A549 (cell line): ENCODE measurements at regions of chr5 and their contacts with region 1.

Region 1: GRCh38 chr5:38382898-38383297 is 124.5 kb downstream of the EGFLAM start:
- DNase-seq: peak; percentile 72 to 76
- ATAC-seq: peak; percentile 96 to 99
- H3K4me3 ChIP-seq: no peak overlapping the region
- H3K27ac ChIP-seq: no peak overlapping the region
- H3K4me1 ChIP-seq: no peaks in the 10 kb centered on the region
- CTCF ChIP-seq: peak; percentile 73
- EP300 ChIP-seq: no peak
- POLR2A ChIP-seq: no peak
- RAD21 ChIP-seq: peak; percentile 73 to 77

Region 2: DNA sequence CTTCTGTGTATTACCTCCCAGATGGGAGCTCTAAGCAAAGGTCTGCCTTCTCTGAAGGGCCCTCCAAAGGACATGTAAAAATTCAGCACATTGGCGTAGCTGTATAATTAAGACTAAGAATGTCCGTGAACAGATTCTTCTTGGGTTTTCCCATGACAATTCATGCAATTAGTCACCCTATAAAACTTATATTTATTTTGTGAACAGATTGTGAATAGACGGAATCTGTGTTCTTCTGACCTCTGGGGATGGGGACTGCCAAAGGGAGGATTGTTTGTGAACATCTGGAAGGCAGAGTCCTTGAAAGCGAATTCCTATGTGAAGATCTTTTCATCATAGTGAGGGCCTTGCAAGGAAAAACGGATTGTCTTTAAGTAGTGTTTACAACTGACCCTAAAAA is 13.2 kb before region 1 on chr5:
- CTCF ChIA-PET with region 1: interaction called, 19 read pairs
- POLR2A ChIA-PET with region 1: interaction called, 5 read pairs
- DNase-seq: no peak
- ATAC-seq: no peak
- H3K4me3 ChIP-seq: no peak overlapping the region
- H3K27ac ChIP-seq: no peak overlapping the region
- H3K4me1 ChIP-seq: no peaks in the 10 kb centered on the region
- CTCF ChIP-seq: no peak
- EP300 ChIP-seq: no peak
- POLR2A ChIP-seq: no peak
- RAD21 ChIP-seq: no peak

Region 3: GRCh38 chr5:38393636-38394035 is 10.7 kb after region 1 on chr5:
- CTCF ChIA-PET with region 1: interaction called, 22 read pairs
- POLR2A ChIA-PET with region 1: no interaction called
- DNase-seq: no peak
- ATAC-seq: no peak
- H3K4me3 ChIP-seq: no peak overlapping the region
- H3K27ac ChIP-seq: no peak overlapping the region
- H3K4me1 ChIP-seq: no peaks in the 10 kb centered on the region
- CTCF ChIP-seq: no peak
- EP300 ChIP-seq: no peak
- POLR2A ChIP-seq: no peak
- RAD21 ChIP-seq: no peak

Region 4: DNA sequence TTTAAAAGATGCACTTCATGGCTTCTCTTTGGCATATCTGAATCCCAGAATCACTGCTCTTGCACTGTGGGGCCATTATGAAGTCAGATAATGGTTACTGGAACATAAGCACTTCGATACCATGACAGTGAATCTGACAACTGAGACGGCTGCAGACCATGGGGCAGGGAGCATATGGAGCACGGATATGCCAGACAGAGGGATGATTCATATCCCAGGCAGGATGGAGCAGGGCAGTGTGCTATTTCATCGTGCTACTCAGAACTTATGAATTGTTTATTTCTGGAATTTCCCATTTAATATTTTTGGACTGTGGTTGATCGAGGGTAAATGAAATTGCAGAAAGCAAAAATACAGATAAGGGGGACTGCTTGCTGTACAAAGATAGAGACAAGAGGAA is 20.5 kb after region 1 on chr5:
- CTCF ChIA-PET with region 1: interaction called, 10 read pairs
- POLR2A ChIA-PET with region 1: no interaction called
- DNase-seq: no peak
- ATAC-seq: 0 out of 6 replicates have a peak, but pooled peaks have one; percentile 38 to 59
- H3K4me3 ChIP-seq: no peak overlapping the region
- H3K27ac ChIP-seq: no peak overlapping the region
- H3K4me1 ChIP-seq: no peaks in the 10 kb centered on the region
- CTCF ChIP-seq: no peak
- EP300 ChIP-seq: no peak
- POLR2A ChIP-seq: no peak
- RAD21 ChIP-seq: no peak

Region 5: GRCh38 chr5:38420691-38421390 is 37.9 kb after region 1 on chr5:
- CTCF ChIA-PET with region 1: interaction called, 11 read pairs
- POLR2A ChIA-PET with region 1: no interaction called
- DNase-seq: peak; percentile 73 to 80
- ATAC-seq: peak; percentile 93 to 97
- H3K4me3 ChIP-seq: no peak overlapping the region
- H3K27ac ChIP-seq: no peak overlapping the region
- H3K4me1 ChIP-seq: no peaks in the 10 kb centered on the region
- CTCF ChIP-seq: peak; percentile 86
- EP300 ChIP-seq: no peak
- POLR2A ChIP-seq: no peak
- RAD21 ChIP-seq: peak; percentile 76 to 83